ENCODE measurements at regions of chr10 and their contacts with region 1.

Region 1: GRCh38 chr10:125149036-125149675 is 11.2 kb downstream of the CTBP2 start:
- DNase-seq: no peak
- H3K4me3 ChIP-seq: peak overlapping the region in 1 of 4 experiments; percentile 16; a peak in 1 of 8 replicates
- H3K27ac ChIP-seq: peak overlapping the region; percentile 30; the same call in 1 of the 2 replicates
- H3K4me1 ChIP-seq: peaks cover 42 to 67% (median 54%) of the 10 kb centered on the region in 4 experiments
- H3K27me3 ChIP-seq: no peaks in the 10 kb centered on the region
- CTCF ChIP-seq: no peak
- EP300 ChIP-seq: no peak
- POLR2A ChIP-seq: no peak; a peak in 1 of 3 replicates
- RAD21 ChIP-seq: no peak

Region 2: DNA sequence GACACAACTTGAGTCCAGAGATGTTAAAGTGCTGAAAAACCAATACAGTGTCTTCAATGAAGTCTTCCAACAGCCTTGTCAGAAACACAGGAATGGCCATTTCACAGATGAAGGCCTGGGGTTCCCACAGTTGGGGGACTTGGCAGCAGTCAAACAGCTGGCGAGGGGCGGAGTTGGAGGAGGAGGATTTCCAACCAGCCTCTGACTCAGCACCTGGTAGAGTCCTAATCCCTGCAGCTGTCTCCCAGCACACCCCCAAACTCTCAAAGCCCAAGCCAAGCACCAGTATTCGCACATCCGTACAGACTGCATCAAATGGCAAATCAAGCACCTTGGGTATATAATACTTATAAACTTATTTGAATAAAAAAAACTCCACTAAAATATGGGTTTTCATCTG is 16.8 kb before region 1 on chr10:
- CTCF ChIA-PET with region 1: interaction called, 4 read pairs
- POLR2A ChIA-PET with region 1: interaction called, 22 read pairs
- DNase-seq: no peak
- H3K4me3 ChIP-seq: no peak overlapping the region
- H3K27ac ChIP-seq: no peak overlapping the region
- H3K4me1 ChIP-seq: peaks cover 21 to 54% (median 39%) of the 10 kb centered on the region in 4 experiments
- H3K27me3 ChIP-seq: no peaks in the 10 kb centered on the region
- CTCF ChIP-seq: no peak
- EP300 ChIP-seq: no peak
- POLR2A ChIP-seq: no peak
- RAD21 ChIP-seq: no peak

Region 3: DNA sequence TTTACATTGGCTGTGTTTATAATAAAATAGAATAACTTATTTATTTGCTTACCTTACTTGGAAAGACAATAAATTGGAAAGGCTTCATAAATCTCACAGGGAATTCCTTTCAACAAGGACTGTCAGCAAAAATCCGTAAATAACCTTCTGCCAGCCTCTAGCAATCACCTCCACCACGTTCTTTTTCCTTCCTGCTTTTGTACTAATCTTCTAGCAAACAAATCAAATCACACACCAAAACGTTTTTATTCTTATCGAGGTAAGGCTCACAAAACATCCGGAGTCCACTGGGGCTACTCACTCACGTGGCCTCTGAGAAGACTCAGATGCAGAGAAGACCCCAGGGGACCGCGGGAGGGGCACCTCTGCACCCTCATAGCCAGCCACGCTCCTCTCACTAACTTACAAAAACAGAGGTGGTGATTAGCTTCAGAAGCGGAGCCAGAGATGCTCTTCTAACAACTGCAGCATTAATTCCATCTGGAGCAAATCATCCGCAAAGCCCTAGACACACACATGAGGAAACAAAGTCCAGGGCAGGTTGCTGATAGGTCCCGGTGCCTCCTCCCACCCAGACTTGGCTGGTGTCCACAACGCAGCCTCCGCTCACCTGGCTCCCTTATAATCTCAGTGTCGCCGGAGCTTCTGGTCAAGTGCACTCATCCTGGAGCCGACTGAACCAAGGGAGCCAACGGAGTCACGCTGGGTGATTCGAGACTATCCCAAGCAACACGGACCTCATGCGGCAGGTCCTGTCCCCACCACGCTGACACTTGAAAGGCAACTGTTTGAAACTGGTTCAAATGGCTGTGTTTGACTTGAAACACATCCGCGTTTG is 11.3 kb before region 1 on chr10:
- CTCF ChIA-PET with region 1: interaction called, 4 read pairs
- POLR2A ChIA-PET with region 1: interaction called, 22 read pairs
- DNase-seq: no peak
- H3K4me3 ChIP-seq: no peak overlapping the region
- H3K27ac ChIP-seq: no peak overlapping the region
- H3K4me1 ChIP-seq: peaks cover 26 to 67% (median 54%) of the 10 kb centered on the region in 4 experiments
- H3K27me3 ChIP-seq: no peaks in the 10 kb centered on the region; a peak in 1 of 7 replicates
- CTCF ChIP-seq: no peak
- EP300 ChIP-seq: no peak
- POLR2A ChIP-seq: no peak
- RAD21 ChIP-seq: no peak

Region 4: DNA sequence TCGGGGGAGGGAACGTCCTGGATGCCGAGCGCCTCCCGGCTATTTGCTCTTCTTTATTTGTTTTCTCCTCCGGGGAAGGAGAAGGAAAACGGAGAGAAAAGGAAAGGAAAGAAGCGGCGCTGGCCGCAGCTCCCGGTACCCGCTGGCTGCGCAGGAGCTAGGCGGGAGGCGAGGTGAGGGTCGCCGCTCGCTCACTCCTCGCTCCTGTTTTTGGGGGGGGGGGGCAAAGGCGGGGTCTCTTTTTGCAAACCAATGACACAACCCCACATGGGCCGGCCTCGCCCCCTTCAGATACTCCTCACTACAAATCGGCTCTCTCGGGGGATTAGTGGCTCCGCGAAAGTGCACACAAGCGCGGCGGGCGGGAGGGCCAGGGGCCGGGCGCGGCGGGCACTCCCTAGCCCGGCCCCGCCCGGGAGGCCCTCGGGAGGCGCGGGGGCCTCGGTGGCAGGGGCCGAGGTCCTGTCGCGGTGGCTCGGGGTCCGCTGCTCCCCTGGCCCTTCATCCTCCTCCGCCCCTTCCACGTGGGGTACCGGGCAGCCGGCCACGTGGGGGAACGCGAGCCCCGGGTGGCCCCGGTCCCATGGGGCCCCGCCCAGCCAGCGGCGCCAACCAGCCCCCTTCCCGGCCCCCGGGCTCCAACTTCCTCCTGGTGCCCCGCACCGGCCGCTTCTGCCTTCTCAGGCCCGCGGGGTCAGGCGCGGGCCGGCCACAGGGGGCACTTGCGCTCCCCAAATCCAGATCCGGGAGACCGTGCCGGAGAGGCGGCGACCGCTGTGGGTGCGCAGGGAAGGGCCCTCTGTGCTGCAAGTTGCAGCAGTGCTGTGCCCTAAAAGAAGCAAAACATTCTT is 11.9 kb after region 1 on chr10:
- CTCF ChIA-PET with region 1: interaction called, 3 read pairs
- POLR2A ChIA-PET with region 1: interaction called, 22 read pairs
- DNase-seq: peak; percentile 62 to 86
- H3K4me3 ChIP-seq: peak overlapping the region; percentile 71 to 95 (median 82)
- H3K27ac ChIP-seq: peak overlapping the region; percentile 62; the same call in 1 of the 2 replicates
- H3K4me1 ChIP-seq: peaks cover 3 to 11% (median 6%) of the 10 kb centered on the region in 4 experiments
- H3K27me3 ChIP-seq: no peaks in the 10 kb centered on the region
- CTCF ChIP-seq: peak; percentile 47 to 62 (median 54)
- EP300 ChIP-seq: no peak
- POLR2A ChIP-seq: peak in 1 of 2 experiments; percentile 27; a peak in 1 of 3 replicates
- RAD21 ChIP-seq: peak; percentile 45 to 72; a peak in 3 of 4 replicates